ENCODE measurements at regions of chr2 and their contacts with region 1.

Region 1: GRCh38 chr2:209208211-209208610 is 215.6 kb upstream of the MAP2 start:
- DNase-seq: peak; percentile 61 to 67 (median 62)
- H3K4me3 ChIP-seq: peak overlapping the region in 3 of 7 experiments; percentile 5 to 50 (median 40)
- H3K27ac ChIP-seq: no peak overlapping the region
- H3K4me1 ChIP-seq: no peaks in the 10 kb centered on the region
- H3K27me3 ChIP-seq: no peaks in the 10 kb centered on the region

Region 2: GRCh38 chr2:208466151-208466919 is 741.9 kb before region 1 on chr2:
- CTCF ChIA-PET with region 1: interaction called, 11 read pairs
- POLR2A ChIA-PET with region 1: no interaction called
- DNase-seq: peak; percentile 68 to 79 (median 72)
- H3K4me3 ChIP-seq: no peak overlapping the region
- H3K27ac ChIP-seq: no peak overlapping the region
- H3K4me1 ChIP-seq: no peaks in the 10 kb centered on the region
- H3K27me3 ChIP-seq: peaks cover 0 to 2% (median 0%) of the 10 kb centered on the region in 5 experiments

Measured in common myeloid progenitor, CD34-positive (primary cell).